Activated CD8-positive, alpha-beta memory T cell treated with anti-CD3 and anti-CD28 coated beads, Interleukin-2, amount 10 ng/mL, durations not matched to agents 7 days and 5 days (primary cell): ENCODE measurements at regions of chr9 and their contacts with region 1.

Region 1: DNA sequence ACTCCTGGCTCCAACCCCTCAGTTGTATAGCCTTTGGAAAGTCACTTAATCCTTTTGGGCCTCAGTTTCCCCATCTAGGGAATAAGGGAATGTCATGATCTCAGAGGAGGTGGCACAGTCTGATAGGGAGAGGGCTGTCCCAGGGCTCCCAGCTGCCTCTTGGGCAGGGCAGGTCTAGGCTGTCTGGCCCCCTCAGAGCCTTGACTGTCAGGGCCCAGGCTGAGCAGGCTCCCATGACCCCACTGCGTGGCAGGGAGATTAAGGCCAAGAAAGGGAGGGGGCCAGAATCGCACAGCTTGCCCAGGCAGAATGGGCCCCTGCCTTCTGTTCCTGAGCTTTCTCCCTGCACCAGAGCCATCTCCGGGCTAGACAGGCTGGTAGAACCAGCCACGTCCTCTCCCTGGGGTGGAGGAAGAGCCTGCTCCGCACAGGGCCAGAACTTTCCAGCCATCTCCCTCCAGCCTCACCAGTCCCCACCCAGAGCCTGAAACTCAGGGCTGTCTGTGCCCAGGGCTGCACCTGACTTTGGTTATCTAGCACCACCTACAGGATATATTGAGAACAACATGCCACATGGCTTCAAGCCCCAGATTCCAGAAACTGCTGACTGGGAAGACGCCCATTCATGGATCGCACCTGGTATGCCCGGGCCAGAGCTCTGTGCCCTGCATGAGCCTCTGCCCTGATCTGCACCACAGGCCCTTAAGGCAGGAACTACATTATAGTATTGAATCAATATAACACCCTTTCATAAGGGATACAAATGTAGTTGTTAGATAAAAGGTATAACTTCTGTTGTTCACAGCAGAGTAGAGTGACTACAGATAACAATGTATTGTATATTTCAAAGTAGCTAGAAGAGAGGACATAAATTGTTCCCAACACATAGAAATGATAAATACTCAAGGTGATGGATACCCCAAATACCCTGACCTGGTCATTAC is 32.0 kb downstream of the NAIF1 start:
- DNase-seq: peak; percentile 81
- ATAC-seq: peak; percentile 57
- H3K4me3 Mint-ChIP-seq: no peak overlapping the region
- H3K27ac Mint-ChIP-seq: peak overlapping the region; percentile 43
- H3K4me1 Mint-ChIP-seq: peaks cover 40% of the 10 kb centered on the region
- H3K27me3 Mint-ChIP-seq: peaks cover 5% of the 10 kb centered on the region

Region 2: DNA sequence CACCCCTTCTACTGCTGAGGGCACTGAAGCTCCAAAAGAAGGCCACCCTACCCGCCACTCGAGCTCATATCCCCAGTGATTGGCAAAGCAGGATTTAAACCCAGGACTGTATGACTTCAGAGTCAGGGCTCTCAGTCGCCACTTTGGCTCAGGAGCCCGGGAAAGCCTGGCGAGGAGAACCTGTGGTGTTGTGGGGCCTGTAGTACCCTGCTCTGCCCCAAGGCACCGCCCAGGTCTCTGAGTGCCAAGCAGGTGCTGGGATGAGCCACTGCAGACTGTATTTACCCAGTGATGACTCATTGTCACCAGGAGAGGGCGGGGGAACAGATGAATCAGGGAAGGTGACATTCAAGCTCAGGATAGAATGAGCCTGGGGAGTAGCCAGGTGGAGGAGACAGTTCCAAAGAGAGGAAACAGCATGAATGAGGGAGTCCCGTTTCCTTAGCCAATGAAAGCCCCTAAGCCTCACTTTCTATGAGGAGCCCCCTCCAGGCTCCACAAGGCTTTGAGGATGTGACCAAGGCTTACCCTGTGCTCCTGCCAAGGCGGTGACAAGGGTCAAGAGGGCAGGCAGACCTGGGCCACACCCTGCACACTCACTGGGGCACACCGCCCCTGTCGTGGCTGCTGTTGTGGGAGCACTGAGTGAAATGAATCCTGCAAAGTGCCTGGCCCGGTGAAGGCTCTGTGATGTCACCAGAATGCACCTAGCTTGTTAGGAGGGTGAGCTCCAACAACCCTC is 79.6 kb before region 1 on chr9:
- CTCF ChIA-PET with region 1: interaction called, 347 read pairs
- DNase-seq: peak; percentile 85
- ATAC-seq: peak; percentile 96
- H3K4me3 Mint-ChIP-seq: no peak overlapping the region
- H3K27ac Mint-ChIP-seq: peak overlapping the region; percentile 8
- H3K4me1 Mint-ChIP-seq: peaks cover 54% of the 10 kb centered on the region
- H3K27me3 Mint-ChIP-seq: no peaks in the 10 kb centered on the region

Region 3: GRCh38 chr9:127970401-127971313 is 64.4 kb before region 1 on chr9:
- CTCF ChIA-PET with region 1: interaction called, 47 read pairs
- DNase-seq: peak; percentile 92
- ATAC-seq: peak; percentile 85
- H3K4me3 Mint-ChIP-seq: peak overlapping the region; percentile 68
- H3K27ac Mint-ChIP-seq: peak overlapping the region; percentile 90
- H3K4me1 Mint-ChIP-seq: peaks cover 89% of the 10 kb centered on the region
- H3K27me3 Mint-ChIP-seq: no peaks in the 10 kb centered on the region

Region 4: GRCh38 chr9:128020692-128021091 is 14.4 kb before region 1 on chr9:
- CTCF ChIA-PET with region 1: interaction called, 25 read pairs
- DNase-seq: no peak
- ATAC-seq: no peak
- H3K4me3 Mint-ChIP-seq: no peak overlapping the region
- H3K27ac Mint-ChIP-seq: no peak overlapping the region
- H3K4me1 Mint-ChIP-seq: peaks cover 47% of the 10 kb centered on the region
- H3K27me3 Mint-ChIP-seq: peaks cover 6% of the 10 kb centered on the region